PC-3 (cell line): ENCODE measurements at regions of chr5 and their contacts with region 1.

Region 1: DNA sequence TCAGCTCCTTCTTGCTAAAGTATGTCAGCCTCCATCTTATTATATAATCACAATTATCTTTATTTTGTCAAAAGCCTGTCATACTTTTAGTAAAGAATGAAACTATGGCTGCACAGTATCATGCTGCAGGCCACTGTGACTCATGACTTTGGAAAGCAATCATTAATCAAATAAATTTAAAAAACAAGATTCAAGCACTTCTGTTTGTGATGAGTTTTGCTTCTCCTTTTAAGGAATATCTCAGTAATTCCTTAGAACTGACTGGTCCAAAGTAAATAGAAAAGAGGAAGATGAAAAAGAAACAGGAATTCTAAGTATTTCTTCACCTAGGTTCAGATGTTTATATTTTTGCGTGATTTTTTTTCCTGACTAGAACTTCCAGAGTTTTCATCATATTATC is 83.1 kb downstream of the EDIL3 start:
- DNase-seq: peak; percentile 77
- ATAC-seq: peak; percentile 79
- H3K4me3 ChIP-seq: peak overlapping the region; percentile 23; the same call in 1 of the 2 replicates
- H3K27ac ChIP-seq: peak overlapping the region; percentile 44
- H3K4me1 ChIP-seq: peaks cover 25% of the 10 kb centered on the region
- H3K27me3 ChIP-seq: no peaks in the 10 kb centered on the region
- CTCF ChIP-seq: no peak

Region 2: GRCh38 chr5:83856881-83857280 is 444.7 kb before region 1 on chr5:
- CTCF ChIA-PET with region 1: no interaction called
- POLR2A ChIA-PET with region 1: no interaction called
- intact Hi-C with region 1: no loop called
- DNase-seq: no peak
- ATAC-seq: no peak
- H3K4me3 ChIP-seq: no peak overlapping the region
- H3K27ac ChIP-seq: no peak overlapping the region
- H3K4me1 ChIP-seq: no peaks in the 10 kb centered on the region
- H3K27me3 ChIP-seq: no peaks in the 10 kb centered on the region
- CTCF ChIP-seq: no peak

Region 3: DNA sequence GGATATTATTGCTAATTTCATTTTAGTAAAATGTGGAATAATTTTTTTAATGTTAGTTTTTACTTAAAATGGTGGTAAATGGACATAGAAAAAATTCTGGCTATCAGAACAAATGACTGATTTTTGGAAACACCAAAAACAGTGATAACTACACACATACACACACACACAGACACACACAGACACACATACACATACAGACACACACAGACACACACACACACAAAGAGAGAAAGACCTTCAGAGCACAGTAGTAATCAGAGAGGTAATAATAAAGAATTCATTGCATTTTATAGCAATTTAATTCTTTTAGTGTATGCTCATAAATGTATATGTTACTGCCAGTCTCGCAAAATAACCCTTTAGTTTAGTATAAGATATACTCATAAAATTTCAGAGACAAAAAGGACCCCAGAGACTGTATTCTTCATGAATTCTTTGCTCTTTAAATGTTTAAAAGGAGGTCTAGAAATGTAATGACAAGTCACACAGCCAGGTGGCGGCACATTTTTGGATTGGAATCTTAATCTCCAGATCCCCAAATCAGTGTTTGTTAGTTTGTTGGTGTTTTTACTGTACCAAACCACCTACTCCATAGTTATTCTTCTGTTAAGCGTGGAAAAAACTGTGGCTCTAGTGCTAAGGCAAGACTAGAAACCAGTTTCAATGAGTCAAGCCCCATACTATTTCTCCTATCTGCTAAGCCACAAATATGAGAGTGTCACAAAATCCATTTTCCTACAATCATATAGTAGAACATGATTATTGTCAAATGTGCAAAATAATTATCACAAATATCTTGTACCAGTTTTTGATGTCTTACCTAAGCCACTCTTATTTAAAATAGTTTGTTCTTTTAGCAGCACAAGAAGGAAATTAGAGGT is 26.7 kb before region 1 on chr5:
- CTCF ChIA-PET with region 1: no interaction called
- POLR2A ChIA-PET with region 1: no interaction called
- intact Hi-C with region 1: no loop called
- DNase-seq: peak; percentile 60
- ATAC-seq: no peak
- H3K4me3 ChIP-seq: no peak overlapping the region
- H3K27ac ChIP-seq: no peak overlapping the region
- H3K4me1 ChIP-seq: no peaks in the 10 kb centered on the region
- H3K27me3 ChIP-seq: no peaks in the 10 kb centered on the region
- CTCF ChIP-seq: peak; percentile 72

Region 4: GRCh38 chr5:84343171-84343570 is 41.6 kb after region 1 on chr5:
- CTCF ChIA-PET with region 1: no interaction called
- POLR2A ChIA-PET with region 1: no interaction called
- intact Hi-C with region 1: loop called (anchors 5 kb)
- DNase-seq: no peak
- ATAC-seq: no peak
- H3K4me3 ChIP-seq: no peak overlapping the region
- H3K27ac ChIP-seq: no peak overlapping the region
- H3K4me1 ChIP-seq: no peaks in the 10 kb centered on the region
- H3K27me3 ChIP-seq: no peaks in the 10 kb centered on the region
- CTCF ChIP-seq: no peak

Region 5: DNA sequence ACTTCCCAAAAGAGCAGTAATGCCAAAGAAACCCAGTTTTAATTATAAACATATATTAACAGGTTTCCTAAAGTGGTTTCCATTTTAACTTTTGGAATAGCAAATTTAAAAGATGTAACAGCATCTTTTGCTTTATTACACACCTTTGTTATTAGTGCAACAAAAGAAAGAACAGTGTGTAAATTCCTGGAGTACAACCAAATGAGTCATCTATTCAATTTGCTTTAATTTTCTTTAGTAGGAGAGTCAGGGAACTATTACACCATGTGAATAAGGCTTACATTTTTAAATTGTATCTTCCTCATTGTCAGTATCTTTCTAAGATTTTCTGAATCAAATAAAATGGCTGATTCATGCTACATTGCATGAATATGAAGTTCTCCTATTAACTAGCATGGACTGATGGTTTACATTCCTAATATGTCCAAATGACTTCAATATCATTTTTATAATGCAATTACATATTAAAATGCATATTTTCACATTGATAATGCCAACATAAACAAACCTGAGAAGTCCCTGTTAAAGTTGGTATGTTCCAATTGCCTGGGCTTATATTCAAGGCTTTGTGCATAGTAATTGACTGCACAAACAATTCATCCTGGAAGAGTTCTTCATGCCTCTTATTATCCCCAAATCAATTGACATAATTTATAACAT is 60.7 kb after region 1 on chr5:
- CTCF ChIA-PET with region 1: no interaction called
- POLR2A ChIA-PET with region 1: no interaction called
- intact Hi-C with region 1: loop called (anchors 10 kb)
- DNase-seq: no peak
- ATAC-seq: peak; percentile 59
- H3K4me3 ChIP-seq: no peak overlapping the region
- H3K27ac ChIP-seq: peak overlapping the region; percentile 26; the same call in 1 of the 2 replicates
- H3K4me1 ChIP-seq: peaks cover 10% of the 10 kb centered on the region; the same call in 1 of the 2 replicates
- H3K27me3 ChIP-seq: no peaks in the 10 kb centered on the region
- CTCF ChIP-seq: no peak

Region 6: DNA sequence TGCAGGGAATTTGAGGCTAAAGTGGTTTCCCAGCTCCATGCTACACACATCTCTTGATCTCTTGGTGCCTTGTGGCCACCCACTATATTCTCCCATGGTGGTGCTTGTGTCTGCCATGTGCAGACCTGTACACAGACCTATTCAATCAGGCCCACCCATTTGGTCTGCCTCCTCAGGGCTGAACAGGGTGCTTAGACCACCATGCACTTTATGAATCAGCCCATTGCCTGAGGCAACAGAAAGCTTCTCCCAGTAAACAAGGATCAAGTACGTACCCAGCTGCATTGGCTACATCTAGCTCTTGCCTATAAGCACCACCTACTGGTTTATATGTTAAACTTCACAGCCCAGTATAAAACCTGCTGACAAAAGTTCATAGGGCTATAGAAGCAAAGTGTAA is 747.5 kb after region 1 on chr5:
- CTCF ChIA-PET with region 1: no interaction called
- POLR2A ChIA-PET with region 1: no interaction called
- intact Hi-C with region 1: no loop called
- DNase-seq: peak; percentile 77
- ATAC-seq: peak; percentile 95
- H3K4me3 ChIP-seq: no peak overlapping the region
- H3K27ac ChIP-seq: no peak overlapping the region
- H3K4me1 ChIP-seq: no peaks in the 10 kb centered on the region
- H3K27me3 ChIP-seq: peaks cover 16% of the 10 kb centered on the region; the same call in 1 of the 2 replicates
- CTCF ChIP-seq: peak; percentile 83